Mammary epithelial cell (primary cell): ENCODE measurements at regions of chr11 and their contacts with region 1.

Region 1: DNA sequence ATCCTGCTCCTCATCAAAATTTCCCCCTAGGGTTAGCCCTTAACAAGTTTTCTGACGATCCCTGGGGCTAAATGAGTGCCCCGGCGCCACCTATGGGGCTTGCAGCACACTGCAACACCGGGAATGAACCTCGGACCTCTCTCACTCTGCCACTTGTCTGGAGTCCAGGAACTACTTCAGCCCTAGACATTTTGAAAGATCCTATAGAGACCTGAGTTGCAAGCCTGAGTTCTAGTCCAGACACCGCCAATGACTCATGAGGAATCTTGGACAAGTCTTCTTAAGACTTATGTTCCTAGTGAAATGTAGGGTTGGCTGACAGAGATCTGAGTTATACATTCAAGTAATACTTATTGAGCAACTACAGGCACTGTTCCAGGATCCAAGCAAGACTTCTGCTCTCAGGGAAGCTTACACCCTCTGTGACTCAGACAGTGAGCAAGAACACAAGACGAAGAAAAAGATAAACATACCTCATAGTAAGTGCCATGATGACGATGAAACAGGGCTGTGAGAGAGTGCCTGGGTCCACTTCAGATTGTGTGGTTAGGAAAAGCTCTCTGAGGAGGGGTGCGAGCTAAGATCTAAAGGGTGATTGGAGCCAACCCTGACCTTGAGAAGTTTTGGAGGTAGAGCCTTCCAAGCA is 10.2 kb upstream of the STK33 start:
- DNase-seq: peak; percentile 100
- H3K4me3 ChIP-seq: no peak overlapping the region
- H3K27ac ChIP-seq: peak overlapping the region; percentile 69
- H3K4me1 ChIP-seq: peaks cover 20% of the 10 kb centered on the region
- H3K27me3 ChIP-seq: no peaks in the 10 kb centered on the region
- CTCF ChIP-seq: peak; percentile 71 to 79

Region 2: DNA sequence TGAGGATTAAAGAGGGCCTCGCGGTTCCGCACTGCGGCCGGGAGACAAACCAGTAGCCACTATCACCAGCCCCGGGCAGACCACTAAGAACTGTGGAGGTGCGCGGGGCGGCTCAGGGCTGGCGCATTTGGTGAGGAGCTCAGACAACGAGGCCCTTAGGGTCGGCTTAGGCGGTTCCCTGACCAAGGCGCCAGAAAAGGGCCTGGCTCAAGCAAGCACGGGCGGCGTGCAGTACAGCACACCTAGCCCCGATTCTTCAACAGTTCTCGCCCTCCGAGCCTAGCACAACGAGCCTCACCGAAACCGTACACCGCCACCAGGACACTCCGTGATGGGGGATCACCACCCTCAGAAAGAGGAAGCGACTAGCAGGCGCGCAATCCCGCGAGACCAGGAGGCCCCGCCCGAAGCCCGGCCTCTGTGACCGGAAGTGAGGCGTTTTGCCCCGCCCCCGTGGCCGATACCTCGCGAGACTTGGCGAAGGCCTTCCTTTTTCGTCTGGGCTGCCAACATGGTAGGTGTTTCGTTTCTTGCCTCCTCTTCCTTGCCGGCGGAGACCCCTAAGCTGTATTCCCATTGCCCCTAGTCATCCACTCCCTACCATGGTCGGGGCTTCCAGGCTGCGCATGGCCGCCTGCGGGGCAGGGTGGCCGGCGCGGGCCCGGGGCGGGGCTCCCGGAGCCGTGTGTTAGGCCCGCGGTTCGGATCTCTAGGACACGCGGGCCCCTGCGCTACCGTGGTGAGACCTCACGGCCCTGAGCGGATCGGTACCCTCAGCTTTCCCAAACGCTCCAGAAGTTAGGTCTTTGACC is 78.3 kb after region 1 on chr11 and contains the starts of genes RPL27A and TRIM66:
- CTCF ChIA-PET with region 1: no interaction called
- dilution Hi-C with region 1: no loop called
- in situ Hi-C with region 1: loop called in 1 of 2 experiments (anchors 5 kb)
- intact Hi-C with region 1: loop called (anchors 2 kb)
- DNase-seq: peak; percentile 94
- H3K4me3 ChIP-seq: peak within 1 kb of the TSS; percentile 75 to 98 (median 78)
- H3K27ac ChIP-seq: peak within 1 kb of the TSS; percentile 94
- H3K4me1 ChIP-seq: peaks cover 18% of the 10 kb centered on the region
- H3K27me3 ChIP-seq: no peaks in the 10 kb centered on the region
- CTCF ChIP-seq: peak in 1 of 2 donors; percentile 9
- total RNA-seq, gene RPL27A: 473 to 864 TPM
- total RNA-seq, gene TRIM66: 7.0 to 17.5 TPM

Region 3: DNA sequence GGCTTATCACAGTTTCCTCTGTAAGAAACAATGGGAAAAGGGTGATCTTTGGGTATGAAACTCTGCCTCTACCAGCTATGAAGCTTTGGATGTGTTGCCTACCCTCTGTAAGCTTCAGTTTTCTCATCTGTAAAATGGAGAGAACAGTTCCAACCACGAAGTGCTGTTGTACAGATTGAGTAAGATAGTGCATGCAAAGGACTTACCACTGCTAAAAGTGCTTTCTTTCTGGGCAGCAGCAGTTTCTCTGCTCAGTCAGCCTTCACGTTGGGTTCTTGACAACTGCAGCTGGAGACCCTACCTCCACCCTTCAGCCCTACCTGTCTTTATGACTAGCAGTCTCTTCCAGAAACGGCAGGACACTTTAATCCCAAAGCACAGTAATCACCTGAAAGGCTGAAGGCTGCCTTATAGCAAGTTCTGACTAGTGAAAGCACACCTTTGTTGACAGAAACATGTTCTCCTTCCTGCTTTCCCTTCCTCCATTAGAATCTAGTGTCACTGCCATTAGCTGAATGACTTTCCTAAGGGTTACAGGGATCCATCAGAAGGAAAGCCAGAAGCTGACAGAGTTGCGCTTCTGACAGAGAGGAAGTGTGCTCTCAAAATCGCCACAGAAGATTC is 169.8 kb after region 1 on chr11:
- CTCF ChIA-PET with region 1: no interaction called
- dilution Hi-C with region 1: no loop called
- in situ Hi-C with region 1: no loop called
- intact Hi-C with region 1: loop called (anchors 5 kb)
- DNase-seq: peak; percentile 60
- H3K4me3 ChIP-seq: no peak overlapping the region
- H3K27ac ChIP-seq: peak overlapping the region; percentile 40
- H3K4me1 ChIP-seq: peaks cover 78% of the 10 kb centered on the region
- H3K27me3 ChIP-seq: no peaks in the 10 kb centered on the region
- CTCF ChIP-seq: no peak